ENCODE measurements at regions of chr3 and their contacts with region 1.

Region 1: GRCh38 chr3:45647148-45647619 is 42.0 kb upstream of the SACM1L start:
- DNase-seq: peak in 1 of 2 experiments; percentile 91
- H3K4me3 ChIP-seq: no peak overlapping the region
- H3K27ac ChIP-seq: peak overlapping the region; percentile 99
- H3K4me1 ChIP-seq: peaks cover 64% of the 10 kb centered on the region
- H3K27me3 ChIP-seq: no peaks in the 10 kb centered on the region
- CTCF ChIP-seq: no peak

Region 2: GRCh38 chr3:44883999-44884431 is 763.2 kb before region 1 on chr3:
- CTCF ChIA-PET with region 1: no interaction called
- POLR2A ChIA-PET with region 1: no interaction called
- intact Hi-C with region 1: loop called (anchors 10 kb)
- DNase-seq: peak; percentile 68 to 91
- H3K4me3 ChIP-seq: no peak overlapping the region
- H3K27ac ChIP-seq: peak overlapping the region; percentile 77
- H3K4me1 ChIP-seq: peaks cover 43% of the 10 kb centered on the region
- H3K27me3 ChIP-seq: no peaks in the 10 kb centered on the region
- CTCF ChIP-seq: no peak

Region 3: DNA sequence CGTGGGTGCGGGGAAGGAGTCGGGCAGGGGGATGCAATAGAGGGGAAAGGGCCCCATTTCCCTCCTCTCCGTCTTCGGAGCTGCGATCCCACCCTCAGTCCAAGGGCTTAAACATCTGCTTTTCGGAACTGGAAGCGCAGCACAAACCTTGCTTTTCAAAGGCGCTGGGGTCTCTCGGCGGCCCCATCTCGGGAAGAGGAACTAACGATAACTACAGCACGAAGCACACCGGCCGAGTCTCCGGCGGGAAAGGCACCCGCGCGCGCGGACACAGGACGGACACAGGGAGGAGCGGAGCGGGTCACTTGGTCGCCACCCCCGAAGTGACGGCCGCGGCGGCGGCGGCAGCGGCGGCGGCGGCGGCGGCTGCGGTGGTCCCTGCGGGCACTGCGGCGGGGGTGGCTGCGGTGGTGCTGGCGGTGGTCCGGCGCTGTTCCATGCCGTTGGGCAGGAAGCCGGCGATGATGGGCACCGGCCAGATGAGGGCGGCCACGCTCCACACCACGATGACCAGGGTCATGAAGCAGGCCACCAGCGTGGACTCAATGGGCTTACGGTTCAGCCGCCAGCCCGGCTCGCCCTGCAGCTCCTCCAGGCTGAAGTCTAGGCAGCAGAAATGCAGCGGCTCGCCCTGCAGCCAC is 422.2 kb before region 1 on chr3:
- CTCF ChIA-PET with region 1: no interaction called
- POLR2A ChIA-PET with region 1: no interaction called
- intact Hi-C with region 1: no loop called
- DNase-seq: peak in 1 of 2 experiments; percentile 78
- H3K4me3 ChIP-seq: peak overlapping the region; percentile 76
- H3K27ac ChIP-seq: peak overlapping the region; percentile 64; the same call in 1 of the 2 replicates
- H3K4me1 ChIP-seq: peaks cover 30% of the 10 kb centered on the region
- H3K27me3 ChIP-seq: no peaks in the 10 kb centered on the region
- CTCF ChIP-seq: peak; percentile 39

Region 4: DNA sequence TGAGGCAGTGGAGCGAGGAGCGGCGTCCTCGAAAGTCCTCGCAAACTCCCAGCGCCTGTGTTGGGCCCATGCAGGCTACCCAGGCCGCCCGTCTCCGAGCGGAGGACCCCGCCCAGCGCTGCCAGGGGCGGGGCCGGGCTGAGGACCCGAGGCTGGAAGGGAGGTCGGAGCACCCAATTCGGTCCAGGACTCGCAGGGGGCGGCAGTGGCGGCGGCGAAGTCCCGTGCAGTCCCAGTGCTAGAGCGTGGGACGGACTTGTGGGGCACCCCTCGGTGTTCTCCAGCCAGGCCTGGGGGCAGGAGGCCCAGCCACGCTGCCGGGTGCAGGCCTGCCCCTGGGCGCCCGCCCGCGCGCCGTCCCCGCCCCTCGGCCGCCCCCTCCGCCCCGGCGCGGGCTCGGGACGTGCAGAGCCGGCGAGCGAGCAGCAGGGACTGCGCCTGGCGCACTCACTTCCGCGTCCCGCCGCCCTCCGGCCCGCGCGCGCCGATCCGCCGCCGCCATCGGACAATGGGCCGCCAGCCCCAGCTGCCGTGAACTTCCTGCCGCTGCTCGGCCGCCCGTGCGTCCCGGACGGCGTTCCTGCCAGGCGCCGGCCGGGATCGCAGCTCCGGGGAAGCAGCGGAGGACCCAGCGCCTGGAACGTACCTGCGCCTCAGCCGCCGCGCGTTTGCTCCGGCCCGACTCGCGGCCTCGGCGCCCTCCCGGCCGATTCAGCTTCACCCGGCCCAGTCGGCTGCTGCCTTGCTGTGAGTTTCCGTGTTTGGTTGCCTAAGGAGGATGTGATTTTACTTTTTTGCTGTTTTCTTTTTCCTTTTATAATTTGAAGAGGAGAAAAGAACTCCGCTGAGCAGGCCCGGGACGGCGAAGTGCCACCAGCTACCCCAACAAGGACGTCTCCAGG is 53.2 kb before region 1 on chr3:
- CTCF ChIA-PET with region 1: no interaction called
- POLR2A ChIA-PET with region 1: interaction called, 15 read pairs
- intact Hi-C with region 1: no loop called
- DNase-seq: peak; percentile 51 to 84
- H3K4me3 ChIP-seq: peak overlapping the region; percentile 64
- H3K27ac ChIP-seq: peak overlapping the region; percentile 41; the same call in 1 of the 2 replicates
- H3K4me1 ChIP-seq: peaks cover 39% of the 10 kb centered on the region
- H3K27me3 ChIP-seq: no peaks in the 10 kb centered on the region
- CTCF ChIP-seq: no peak

Region 5: GRCh38 chr3:45635477-45636256 is 11.5 kb before region 1 on chr3:
- CTCF ChIA-PET with region 1: interaction called, 12 read pairs
- POLR2A ChIA-PET with region 1: interaction called, 52 read pairs
- intact Hi-C with region 1: no loop called
- DNase-seq: peak; percentile 61 to 85
- H3K4me3 ChIP-seq: no peak overlapping the region
- H3K27ac ChIP-seq: peak overlapping the region; percentile 60
- H3K4me1 ChIP-seq: peaks cover 44% of the 10 kb centered on the region
- H3K27me3 ChIP-seq: no peaks in the 10 kb centered on the region
- CTCF ChIP-seq: no peak

Region 6: DNA sequence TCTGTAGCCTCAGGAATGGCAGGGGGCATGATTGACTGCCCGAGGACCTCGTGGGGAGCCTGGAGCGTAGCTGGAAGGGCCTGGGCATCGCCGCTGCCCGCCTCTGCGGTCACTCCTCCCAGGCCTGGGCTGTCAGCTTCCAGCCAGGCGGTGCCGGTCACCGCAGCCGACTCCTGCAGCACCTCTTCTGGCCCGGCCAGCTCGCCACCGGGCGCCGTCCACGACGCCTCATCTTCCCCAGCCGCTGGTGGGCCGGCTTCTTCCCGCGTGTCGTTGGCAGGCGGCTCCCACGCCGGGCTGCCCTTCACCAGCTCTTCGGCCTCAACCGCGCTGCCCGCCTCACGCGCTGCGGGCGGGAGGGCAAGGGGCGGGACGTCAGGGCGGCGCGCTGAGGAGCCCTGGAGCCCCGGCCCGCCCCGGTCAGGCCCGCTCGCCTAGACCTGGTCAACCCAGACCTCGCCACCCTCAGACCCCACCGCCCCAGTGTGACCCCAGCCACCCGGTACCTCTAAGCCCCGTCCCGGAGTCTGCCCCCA is 1930.5 kb after region 1 on chr3:
- CTCF ChIA-PET with region 1: no interaction called
- POLR2A ChIA-PET with region 1: interaction called, 11 read pairs
- intact Hi-C with region 1: no loop called
- DNase-seq: no peak
- H3K4me3 ChIP-seq: no peak overlapping the region; the same call in 1 of the 2 replicates
- H3K27ac ChIP-seq: no peak overlapping the region
- H3K4me1 ChIP-seq: no peaks in the 10 kb centered on the region
- H3K27me3 ChIP-seq: peaks cover 4% of the 10 kb centered on the region; the same call in 1 of the 2 replicates
- CTCF ChIP-seq: no peak

Measured in PC-9 (cell line).